ENCODE measurements at regions of chr20 and their contacts with region 1.

Region 1: DNA sequence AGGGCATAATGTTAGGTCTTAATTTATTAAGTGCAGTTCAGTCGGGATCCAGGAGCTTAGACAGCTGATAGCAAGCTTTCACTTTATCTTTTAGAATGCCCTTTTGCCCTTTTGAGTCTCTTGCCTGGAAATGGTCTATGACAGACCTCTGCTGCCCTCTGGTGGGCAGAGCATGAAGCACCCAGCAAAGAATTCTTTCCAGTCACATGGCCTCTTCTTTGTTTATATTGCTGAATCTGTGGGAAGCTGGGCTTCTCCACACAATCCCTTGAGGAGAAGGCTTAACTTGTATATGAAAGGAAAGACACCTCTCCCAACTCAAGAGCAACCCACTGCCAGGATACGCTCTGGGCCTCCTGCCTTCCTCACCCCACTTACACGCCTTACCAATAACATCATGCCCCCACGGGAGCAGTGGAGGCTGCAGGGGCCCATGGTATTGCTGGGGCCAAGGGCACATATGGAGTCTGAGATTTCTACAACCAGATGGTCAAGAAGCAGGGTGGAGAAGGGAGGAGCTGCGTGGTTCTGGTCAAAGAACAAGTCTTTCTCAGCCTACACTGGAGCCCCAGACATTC is 20.4 kb downstream of the WFDC3 start:
- DNase-seq: peak; percentile 62 to 88 (median 76)
- H3K4me3 ChIP-seq: no peak overlapping the region
- H3K27ac ChIP-seq: peak overlapping the region in 29 of 59 donors; percentile 10 to 72 (median 52)
- H3K27me3 ChIP-seq: no peaks in the 10 kb centered on the region
- CTCF ChIP-seq: peak; percentile 91 to 100 (median 98)

Region 2: GRCh38 chr20:45322952-45323383 is 448.3 kb before region 1 on chr20:
- intact Hi-C with region 1: loop called (anchors 2 kb)
- DNase-seq: peak in 8 of 10 donors; percentile 40 to 78 (median 66)
- H3K4me3 ChIP-seq: no peak overlapping the region
- H3K27ac ChIP-seq: peak overlapping the region in 12 of 59 donors; percentile 6 to 56 (median 23)
- H3K27me3 ChIP-seq: no peaks in the 10 kb centered on the region
- CTCF ChIP-seq: peak in 54 of 56 donors; percentile 19 to 80 (median 58)

Region 3: DNA sequence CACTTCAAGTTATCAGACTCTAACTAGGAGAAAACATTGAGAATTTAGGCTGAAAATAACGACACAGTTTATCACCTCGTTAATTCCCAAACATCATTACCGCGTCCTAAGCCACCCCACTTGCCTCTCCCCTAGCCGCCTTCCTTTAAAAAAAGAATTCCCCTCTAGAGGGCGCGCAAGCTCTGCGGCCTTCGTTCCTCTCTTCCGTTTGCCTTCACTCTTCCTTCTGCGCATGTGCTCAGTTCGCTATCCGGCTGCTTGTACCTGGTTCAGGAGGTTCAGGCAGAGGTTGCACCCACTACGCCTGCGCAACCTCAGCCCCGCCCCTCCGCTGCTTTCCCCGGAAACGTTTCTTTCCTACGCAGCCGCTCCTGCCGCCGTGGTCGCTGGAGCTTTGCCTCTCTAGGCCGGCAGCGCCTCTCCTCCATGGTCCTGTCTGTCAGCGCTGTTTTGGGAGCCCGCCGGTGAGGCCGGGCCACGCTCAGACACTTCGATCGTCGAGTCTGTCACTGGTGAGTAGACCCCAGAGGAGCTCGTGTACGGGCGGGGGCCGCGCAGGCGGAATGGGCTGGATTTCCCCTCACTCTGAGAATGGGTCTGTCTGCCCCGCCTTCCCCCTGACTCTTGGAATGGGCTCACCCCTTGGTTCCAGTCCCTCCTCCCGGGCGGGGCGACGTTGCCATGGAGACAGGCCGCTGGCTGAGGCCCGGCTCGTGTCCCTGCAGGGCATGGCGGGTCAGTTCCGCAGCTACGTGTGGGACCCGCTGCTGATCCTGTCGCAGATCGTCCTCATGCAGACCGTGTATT is 408.3 kb before region 1 on chr20 and contains the start of gene SYS1:
- intact Hi-C with region 1: loop called in 1 of 2 experiments (anchors 10 kb)
- DNase-seq: peak; percentile 96 to 98 (median 96)
- H3K4me3 ChIP-seq: peak within 1 kb of the TSS; percentile 48 to 99 (median 81)
- H3K27ac ChIP-seq: peak within 1 kb of the TSS; percentile 64 to 99 (median 96)
- H3K27me3 ChIP-seq: no peaks in the 10 kb centered on the region
- CTCF ChIP-seq: peak; percentile 85 to 99 (median 95)
- total RNA-seq, gene SYS1: 19.5 to 49.7 (median 29.3) TPM

Region 4: DNA sequence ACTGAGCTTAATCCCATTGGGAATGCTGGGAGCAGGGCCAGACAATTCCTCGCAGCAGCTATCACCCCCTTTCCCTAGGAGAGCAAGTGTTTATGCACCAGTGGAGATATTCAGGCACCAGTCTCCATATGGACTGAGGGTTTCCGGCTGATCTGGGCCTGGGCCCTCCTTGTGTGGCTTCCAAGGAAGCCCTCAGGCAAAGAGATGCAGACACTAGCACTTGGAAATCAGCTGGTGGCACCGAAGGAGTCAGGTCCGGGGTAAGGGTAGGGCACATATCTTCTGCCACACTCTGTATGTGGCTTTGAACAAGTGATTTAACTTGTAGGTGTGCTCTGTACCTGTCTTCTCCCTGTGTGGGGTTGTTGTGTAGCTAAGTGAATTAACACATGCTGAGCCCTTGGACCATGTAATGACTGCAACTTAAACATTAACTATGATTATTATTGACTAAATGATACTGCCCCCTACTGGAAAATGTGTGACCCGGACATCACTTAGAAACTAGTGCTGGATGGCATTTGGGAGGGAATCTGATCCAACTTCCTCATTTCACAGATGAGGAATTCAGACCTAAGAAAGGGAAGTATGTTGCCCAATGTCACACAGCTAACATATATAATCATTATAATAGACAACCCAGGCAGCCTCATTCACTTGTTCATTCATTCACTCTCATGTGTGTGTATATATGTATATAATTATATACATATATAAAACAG is 321.0 kb before region 1 on chr20:
- intact Hi-C with region 1: loop called in 1 of 2 experiments (anchors 5 kb)
- DNase-seq: no peak
- H3K4me3 ChIP-seq: no peak overlapping the region
- H3K27ac ChIP-seq: no peak overlapping the region
- H3K27me3 ChIP-seq: no peaks in the 10 kb centered on the region
- CTCF ChIP-seq: peak; percentile 42 to 81 (median 70)

Region 5: GRCh38 chr20:45545754-45546453 is 225.4 kb before region 1 on chr20:
- intact Hi-C with region 1: loop called (anchors 2 to 5 kb)
- DNase-seq: no peak
- H3K4me3 ChIP-seq: no peak overlapping the region
- H3K27ac ChIP-seq: no peak overlapping the region
- H3K27me3 ChIP-seq: peaks cover 0 to 8% (median 0%) of the 10 kb centered on the region in 45 donors
- CTCF ChIP-seq: peak in 54 of 56 donors; percentile 19 to 75 (median 50)

Region 6: GRCh38 chr20:46070215-46070900 is 299.1 kb after region 1 on chr20:
- intact Hi-C with region 1: no loop called
- DNase-seq: no peak
- H3K4me3 ChIP-seq: no peak overlapping the region
- H3K27ac ChIP-seq: no peak overlapping the region
- H3K27me3 ChIP-seq: no peaks in the 10 kb centered on the region
- CTCF ChIP-seq: no peak

Measured in dorsolateral prefrontal cortex (tissue), 120 donors.